Left lung (tissue), 14 donors: ENCODE measurements at regions of chr12 and their contacts with region 1.

Region 1: DNA sequence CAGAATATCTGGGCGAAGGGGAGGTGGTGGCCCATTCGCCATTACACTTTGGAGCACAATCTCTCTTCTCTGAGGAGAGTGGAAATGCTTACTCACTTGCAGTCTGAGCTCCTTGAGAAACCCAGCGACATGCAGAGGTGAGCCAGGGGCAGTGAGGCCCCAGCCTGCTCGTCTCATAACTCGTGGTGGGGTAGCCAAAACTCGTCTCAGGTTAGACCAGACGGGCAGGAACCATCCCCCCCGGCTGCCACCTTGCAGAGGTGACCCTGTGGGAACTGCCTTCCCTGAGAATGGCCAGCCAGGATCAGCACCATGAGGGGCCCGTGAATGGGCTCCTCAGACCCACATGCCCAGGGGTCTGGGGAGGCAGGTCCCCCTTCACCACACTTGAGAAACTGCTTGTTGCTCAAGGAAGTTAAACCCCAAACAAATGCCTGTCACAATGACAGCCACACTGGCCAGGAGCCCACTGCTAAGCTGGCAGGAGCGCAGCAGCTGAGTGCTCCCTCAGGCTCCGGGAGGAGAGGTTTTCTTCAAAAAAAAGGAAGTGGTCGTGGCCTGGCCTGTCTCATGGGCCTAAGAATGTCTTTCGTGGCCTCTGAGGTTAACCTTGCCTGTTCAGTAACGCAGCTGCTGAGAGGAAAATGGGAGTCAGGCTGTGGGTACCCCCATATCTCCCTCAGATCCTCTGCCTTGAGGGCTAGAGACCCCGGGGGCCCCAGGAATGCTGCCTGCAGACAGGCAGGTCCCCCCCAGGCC is 9.2 kb upstream of the ALDH2 start:
- DNase-seq: peak in 3 of 4 donors; percentile 51 to 82 (median 69)
- ATAC-seq: peak; percentile 62
- H3K4me3 ChIP-seq: no peak overlapping the region
- H3K27ac ChIP-seq: peak overlapping the region; percentile 41 to 67
- H3K4me1 ChIP-seq: peaks cover 12 to 21% of the 10 kb centered on the region in 2 donors
- H3K27me3 ChIP-seq: no peaks in the 10 kb centered on the region
- CTCF ChIP-seq: no peak

Region 2: GRCh38 chr12:111377440-111377839 is 380.1 kb before region 1 on chr12:
- intact Hi-C with region 1: no loop called
- DNase-seq: peak in 1 of 4 donors; percentile 16
- ATAC-seq: no peak
- H3K4me3 ChIP-seq: no peak overlapping the region
- H3K27ac ChIP-seq: no peak overlapping the region
- H3K4me1 ChIP-seq: no peaks in the 10 kb centered on the region
- H3K27me3 ChIP-seq: no peaks in the 10 kb centered on the region
- CTCF ChIP-seq: no peak

Region 3: GRCh38 chr12:111812881-111813741 is 55.6 kb after region 1 on chr12:
- intact Hi-C with region 1: loop called in 1 of 2 experiments (anchors 5 kb)
- DNase-seq: peak in 3 of 4 donors; percentile 75 to 89 (median 79)
- ATAC-seq: peak; percentile 99
- H3K4me3 ChIP-seq: no peak overlapping the region
- H3K27ac ChIP-seq: peak overlapping the region in 1 of 2 donors; percentile 21
- H3K4me1 ChIP-seq: peaks cover 0 to 6% of the 10 kb centered on the region in 2 donors
- H3K27me3 ChIP-seq: no peaks in the 10 kb centered on the region
- CTCF ChIP-seq: peak; percentile 67 to 81

Region 4: DNA sequence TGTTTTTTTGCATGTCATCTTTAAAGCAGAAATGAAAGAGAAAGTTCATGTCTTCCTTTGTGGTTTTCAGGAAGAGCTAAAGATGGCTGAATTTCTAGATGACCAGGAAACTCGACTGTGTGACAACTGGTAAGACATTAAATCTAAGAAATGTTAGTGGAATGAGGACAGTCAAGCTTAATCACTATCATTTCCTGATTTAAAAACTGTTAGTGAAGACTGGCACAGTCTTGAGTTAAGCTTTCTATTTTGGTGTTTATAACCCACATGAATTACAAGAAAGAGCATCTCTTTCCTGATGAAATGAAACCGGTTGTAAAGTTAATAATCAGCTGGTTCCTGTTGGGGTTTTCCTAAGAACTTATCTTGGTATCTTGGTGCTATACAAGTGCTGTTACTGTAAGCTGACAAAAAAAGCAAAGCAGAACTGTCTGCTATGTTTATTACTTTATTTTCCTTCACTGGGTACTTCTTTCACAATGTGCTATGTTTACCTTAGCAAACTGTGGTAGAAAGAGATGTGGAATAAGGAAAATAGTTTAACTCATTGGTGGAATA is 373.0 kb after region 1 on chr12:
- intact Hi-C with region 1: no loop called
- DNase-seq: no peak
- ATAC-seq: peak; percentile 43
- H3K4me3 ChIP-seq: peak overlapping the region in 1 of 2 donors; percentile 22
- H3K27ac ChIP-seq: peak overlapping the region; percentile 81 to 87
- H3K4me1 ChIP-seq: peaks cover 41 to 81% of the 10 kb centered on the region in 2 donors
- H3K27me3 ChIP-seq: no peaks in the 10 kb centered on the region
- CTCF ChIP-seq: no peak